PC-3 (cell line): ENCODE measurements at regions of chr1 and their contacts with region 1.

Region 1: GRCh38 chr1:85061711-85062424 is 13.6 kb upstream of the MCOLN3 start:
- DNase-seq: peak; percentile 93
- ATAC-seq: peak; percentile 99
- H3K4me3 ChIP-seq: peak overlapping the region; percentile 70
- H3K27ac ChIP-seq: no peak overlapping the region
- H3K4me1 ChIP-seq: peaks cover 9% of the 10 kb centered on the region
- H3K27me3 ChIP-seq: no peaks in the 10 kb centered on the region
- CTCF ChIP-seq: no peak

Region 2: DNA sequence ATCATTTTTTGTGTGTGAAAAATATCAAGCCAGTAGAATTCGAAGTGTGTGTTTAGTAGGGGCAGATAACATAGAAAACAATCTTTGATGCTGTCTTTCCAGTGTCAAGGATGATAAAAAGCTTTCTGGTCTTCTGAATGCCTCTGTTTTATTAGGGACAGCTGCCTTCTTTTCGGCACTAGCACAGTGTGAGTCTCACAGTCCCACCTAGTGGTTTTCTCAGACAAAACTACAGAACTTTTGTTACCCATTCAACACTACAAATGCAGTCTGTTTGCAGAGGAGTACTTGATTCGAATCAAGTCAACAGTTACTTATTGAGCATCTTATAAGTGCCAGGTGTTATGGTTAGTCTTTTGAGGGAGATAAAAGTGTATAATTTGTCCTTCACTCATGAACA is 17.0 kb after region 1 on chr1:
- CTCF ChIA-PET with region 1: interaction called, 10 read pairs
- POLR2A ChIA-PET with region 1: no interaction called
- intact Hi-C with region 1: no loop called
- DNase-seq: peak; percentile 33
- ATAC-seq: peak; percentile 75
- H3K4me3 ChIP-seq: no peak overlapping the region
- H3K27ac ChIP-seq: no peak overlapping the region
- H3K4me1 ChIP-seq: no peaks in the 10 kb centered on the region
- H3K27me3 ChIP-seq: no peaks in the 10 kb centered on the region
- CTCF ChIP-seq: peak; percentile 45; the same call in 1 of the 2 replicates